ENCODE measurements at regions of chr14 and their contacts with region 1.

Region 1: DNA sequence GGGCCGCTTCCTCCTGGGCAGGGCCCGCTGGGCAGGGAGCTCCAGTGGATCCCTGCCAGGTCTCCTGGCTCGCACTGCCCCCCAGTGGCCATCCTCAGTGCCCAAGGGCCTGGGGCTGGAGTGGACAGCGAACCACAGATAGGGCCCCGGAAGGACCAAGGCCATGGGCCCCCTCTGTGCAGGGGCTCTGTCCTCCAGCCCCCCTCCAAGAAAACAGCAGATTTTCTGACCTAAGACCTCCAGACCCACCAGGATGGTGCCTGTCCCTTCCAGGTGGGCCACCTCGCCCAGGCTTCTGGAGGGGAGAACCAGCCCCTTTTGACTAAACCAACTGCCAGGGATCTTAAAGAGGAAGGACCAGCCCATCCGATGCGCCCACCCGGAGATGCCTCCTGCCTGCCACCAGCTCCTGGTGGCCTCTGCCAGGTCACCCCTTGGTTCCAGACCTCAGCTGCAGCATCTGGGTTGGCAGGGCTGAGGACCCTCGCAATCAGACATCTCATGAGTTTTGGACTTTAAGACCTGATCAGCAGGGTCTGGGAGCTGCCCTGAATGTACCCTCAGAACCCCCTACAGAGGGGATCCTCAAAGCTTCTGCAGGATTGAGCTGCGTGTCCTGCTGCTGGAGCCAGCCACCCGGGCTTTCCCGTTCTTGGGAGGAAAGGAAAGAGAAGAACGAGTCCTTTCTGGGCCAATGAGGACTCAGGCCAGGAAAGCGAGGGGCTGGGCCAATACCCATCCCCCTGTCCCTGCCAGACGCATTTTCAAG is 325.8 kb upstream of the DIO3 start:
- DNase-seq: peak in 3 of 5 donors; percentile 27 to 45 (median 33)
- ATAC-seq: peak in 3 of 4 donors; percentile 62 to 68 (median 68)
- H3K4me3 ChIP-seq: no peak overlapping the region
- H3K27ac ChIP-seq: no peak overlapping the region
- H3K4me1 ChIP-seq: no peaks in the 10 kb centered on the region
- H3K27me3 ChIP-seq: peaks cover 0 to 47% (median 4%) of the 10 kb centered on the region in 9 donors
- CTCF ChIP-seq: peak; percentile 36 to 59 (median 52)
- POLR2A ChIP-seq: no peak

Region 2: GRCh38 chr14:100662879-100663760 is 572.4 kb before region 1 on chr14:
- intact Hi-C with region 1: loop called in 2 of 10 experiments (anchors 2 to 5 kb)
- DNase-seq: peak; percentile 53 to 81 (median 65)
- ATAC-seq: peak in 2 of 4 donors; percentile 59 to 62
- H3K4me3 ChIP-seq: no peak overlapping the region
- H3K27ac ChIP-seq: peak overlapping the region in 1 of 12 donors; percentile 23
- H3K4me1 ChIP-seq: peaks cover 0 to 16% (median 0%) of the 10 kb centered on the region in 12 donors
- H3K27me3 ChIP-seq: peaks cover 0 to 41% (median 4%) of the 10 kb centered on the region in 9 donors
- CTCF ChIP-seq: peak; percentile 77 to 99 (median 92)
- POLR2A ChIP-seq: no peak

Region 3: GRCh38 chr14:100709289-100710284 is 525.9 kb before region 1 on chr14:
- intact Hi-C with region 1: loop called in 1 of 10 experiments (anchors 10 kb)
- DNase-seq: peak in 1 of 5 donors; percentile 43
- ATAC-seq: peak in 3 of 4 donors; percentile 53 to 61 (median 57)
- H3K4me3 ChIP-seq: peak overlapping the region in 10 of 12 donors; percentile 2 to 41 (median 22)
- H3K27ac ChIP-seq: peak overlapping the region in 5 of 12 donors; percentile 9 to 74 (median 46)
- H3K4me1 ChIP-seq: peaks cover 0 to 26% (median 7%) of the 10 kb centered on the region in 12 donors
- H3K27me3 ChIP-seq: peaks cover 0 to 54% (median 20%) of the 10 kb centered on the region in 9 donors
- CTCF ChIP-seq: peak in 11 of 12 donors; percentile 16 to 80 (median 40)
- POLR2A ChIP-seq: no peak

Region 4: GRCh38 chr14:100850841-100851585 is 384.5 kb before region 1 on chr14:
- intact Hi-C with region 1: loop called in 1 of 10 experiments (anchors 10 kb)
- DNase-seq: peak; percentile 42 to 81 (median 58)
- ATAC-seq: peak; percentile 37 to 75 (median 67)
- H3K4me3 ChIP-seq: no peak overlapping the region
- H3K27ac ChIP-seq: no peak overlapping the region
- H3K4me1 ChIP-seq: peaks cover 0 to 3% (median 0%) of the 10 kb centered on the region in 12 donors
- H3K27me3 ChIP-seq: peaks cover 0 to 5% (median 0%) of the 10 kb centered on the region in 9 donors
- CTCF ChIP-seq: peak; percentile 33 to 89 (median 57)
- POLR2A ChIP-seq: no peak